Posterior cingulate gyrus (tissue), 11 donors: ENCODE measurements at regions of chr19 and their contacts with region 1.

Region 1: DNA sequence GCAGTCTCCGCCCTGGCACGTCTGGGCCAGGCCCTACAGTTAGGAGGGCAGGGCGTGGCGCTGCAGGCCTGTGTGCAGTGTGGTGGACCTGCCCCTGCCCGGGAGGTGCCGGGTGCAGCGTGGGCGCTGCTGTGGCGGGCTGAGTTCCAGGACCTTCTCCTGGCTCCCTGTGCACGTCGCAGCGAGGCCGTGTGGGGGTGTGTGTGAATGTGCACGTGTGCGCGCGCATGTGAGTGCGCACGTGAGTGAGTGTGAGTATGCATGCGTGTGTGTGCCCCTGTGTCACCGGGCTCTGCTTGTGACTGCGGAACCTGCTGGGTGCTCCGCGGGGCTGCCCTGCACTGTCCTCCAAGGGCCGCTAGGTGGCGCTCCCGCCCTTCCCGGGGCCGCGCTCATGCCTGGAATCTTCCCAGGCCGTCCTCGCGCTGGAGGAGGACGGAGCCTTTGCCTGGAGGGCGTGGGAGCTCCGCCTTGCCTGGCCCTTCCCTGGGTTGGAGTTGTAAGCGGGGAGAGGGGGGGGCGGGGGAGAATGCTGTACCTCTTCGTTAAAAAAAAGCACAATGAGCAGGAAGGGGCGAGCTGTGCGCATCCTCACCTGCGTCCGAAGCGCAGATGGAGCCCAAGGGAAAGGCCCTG is 79.3 kb downstream of the KDM4B start:
- DNase-seq: peak; percentile 73 to 98 (median 83)

Region 2: DNA sequence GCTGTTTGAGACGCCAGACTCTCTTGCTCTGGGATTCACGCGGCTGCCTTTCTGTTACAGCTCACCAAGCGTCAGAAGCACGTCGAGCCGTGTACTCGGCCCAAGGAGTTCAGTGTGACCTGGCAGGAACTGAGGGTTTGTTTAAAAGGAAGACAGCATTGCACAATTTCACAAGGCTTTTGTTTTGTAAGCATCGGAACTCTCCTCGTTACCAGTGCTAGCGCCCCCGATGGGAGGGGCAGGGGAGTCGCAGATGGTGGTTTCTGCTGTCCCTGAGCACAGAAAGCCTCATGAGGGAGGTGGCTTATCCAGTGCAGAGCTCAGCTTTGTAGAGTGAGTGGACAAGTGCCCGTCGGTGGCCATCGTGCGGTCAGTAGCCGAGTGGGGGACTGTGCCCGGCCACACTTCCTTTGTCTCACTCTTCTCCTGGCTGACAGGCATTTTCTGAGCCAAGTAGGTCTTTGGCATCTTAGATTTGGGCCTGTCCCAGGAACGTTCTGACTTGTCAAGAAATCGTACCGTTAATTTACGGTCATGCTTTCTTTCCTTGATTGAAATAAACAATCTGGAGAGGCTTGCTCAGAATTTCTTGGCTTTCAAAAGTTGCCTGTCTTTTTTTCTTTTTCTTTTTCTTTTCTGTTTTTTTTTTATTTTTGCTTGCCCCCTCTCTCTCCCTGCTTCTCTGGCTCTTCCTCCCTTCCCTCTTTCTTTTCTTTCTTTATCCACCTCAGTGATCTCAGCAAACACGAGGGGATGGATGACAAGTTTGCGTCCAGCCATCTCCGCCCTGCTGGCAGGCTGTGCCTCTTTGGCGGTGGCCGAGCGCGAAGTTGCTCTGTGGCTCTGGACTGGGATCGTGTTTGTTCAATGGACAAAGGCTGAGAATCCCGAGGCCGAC is 71.6 kb before region 1 on chr19:
- intact Hi-C with region 1: no loop called
- DNase-seq: peak in 6 of 10 donors; percentile 37 to 86 (median 56)

Region 3: GRCh38 chr19:5138606-5139582 is 90.7 kb after region 1 on chr19:
- intact Hi-C with region 1: loop called (anchors 5 kb)
- DNase-seq: peak in 7 of 10 donors; percentile 32 to 93 (median 63)

Region 4: DNA sequence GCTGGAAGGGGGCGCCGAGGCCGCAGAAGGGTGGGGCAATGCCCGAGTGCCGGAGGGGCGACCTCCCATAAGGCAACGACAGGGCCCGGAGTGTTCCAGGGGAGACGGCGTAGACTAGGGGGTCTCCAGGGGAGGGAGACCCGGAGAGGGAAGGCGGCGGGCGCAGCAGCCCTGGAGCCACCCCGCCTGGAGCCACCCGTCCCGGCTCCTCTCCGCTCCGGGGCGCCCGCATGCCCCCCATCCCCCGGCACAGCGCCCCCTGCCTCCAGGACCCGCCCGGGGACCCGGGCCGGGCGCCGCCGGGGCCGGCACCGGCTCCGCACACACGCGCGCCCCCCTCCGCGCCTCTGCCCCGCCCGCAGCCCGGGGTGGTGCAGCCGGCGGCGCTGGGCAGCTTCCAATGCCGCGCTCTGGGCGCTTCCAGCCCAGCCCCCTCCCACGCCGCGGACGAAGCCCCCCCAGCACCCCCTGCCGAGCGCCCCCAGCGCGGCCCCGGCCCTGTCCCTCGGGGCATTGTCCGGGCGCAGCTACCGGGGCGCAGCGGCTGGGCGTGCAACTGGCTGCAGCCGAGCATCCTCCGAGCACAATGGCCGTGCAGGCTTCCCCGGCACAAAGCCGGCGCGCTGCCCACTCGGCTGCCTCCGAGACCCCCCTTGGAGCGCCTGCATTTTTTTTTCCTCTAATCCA is 291.9 kb after region 1 on chr19:
- intact Hi-C with region 1: loop called (anchors 10 kb)
- DNase-seq: peak in 3 of 10 donors; percentile 36 to 91 (median 56)

Region 5: DNA sequence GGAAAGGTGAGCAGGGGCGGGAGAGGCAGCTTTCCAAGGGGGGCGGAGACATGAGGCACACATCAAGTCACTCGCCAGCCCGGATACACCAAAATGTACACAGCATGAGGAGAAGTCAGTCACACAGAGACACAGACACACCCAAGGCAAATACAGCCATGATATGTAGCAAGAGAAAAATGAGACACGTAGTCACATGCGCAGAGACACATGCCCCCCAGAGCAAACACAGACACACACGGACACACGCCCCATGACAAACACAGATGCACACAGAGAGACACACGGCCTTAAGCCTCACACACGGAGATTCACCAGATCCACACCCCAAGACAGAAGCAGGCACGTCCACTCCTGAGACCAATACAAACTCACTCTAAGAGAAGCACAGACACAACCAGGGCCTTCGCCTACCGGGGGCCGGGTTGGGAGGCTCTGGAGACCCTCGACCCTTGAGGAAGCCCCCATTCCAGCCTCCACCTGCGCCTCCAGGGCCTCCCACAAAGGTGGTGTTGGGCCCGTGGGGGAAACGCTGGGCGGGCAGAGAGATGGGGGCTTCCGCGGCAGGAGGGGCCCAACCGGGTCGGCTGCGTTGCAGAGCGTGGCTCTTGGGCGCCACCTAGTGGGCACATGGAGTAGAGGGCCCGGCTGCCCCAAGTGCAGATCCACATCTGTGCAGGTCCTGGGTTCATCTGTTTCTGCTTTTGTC is 529.7 kb after region 1 on chr19:
- intact Hi-C with region 1: loop called (anchors 2 kb)
- DNase-seq: peak; percentile 44 to 94 (median 74)